ENCODE measurements at regions of chr13 and their contacts with region 1.

Region 1: DNA sequence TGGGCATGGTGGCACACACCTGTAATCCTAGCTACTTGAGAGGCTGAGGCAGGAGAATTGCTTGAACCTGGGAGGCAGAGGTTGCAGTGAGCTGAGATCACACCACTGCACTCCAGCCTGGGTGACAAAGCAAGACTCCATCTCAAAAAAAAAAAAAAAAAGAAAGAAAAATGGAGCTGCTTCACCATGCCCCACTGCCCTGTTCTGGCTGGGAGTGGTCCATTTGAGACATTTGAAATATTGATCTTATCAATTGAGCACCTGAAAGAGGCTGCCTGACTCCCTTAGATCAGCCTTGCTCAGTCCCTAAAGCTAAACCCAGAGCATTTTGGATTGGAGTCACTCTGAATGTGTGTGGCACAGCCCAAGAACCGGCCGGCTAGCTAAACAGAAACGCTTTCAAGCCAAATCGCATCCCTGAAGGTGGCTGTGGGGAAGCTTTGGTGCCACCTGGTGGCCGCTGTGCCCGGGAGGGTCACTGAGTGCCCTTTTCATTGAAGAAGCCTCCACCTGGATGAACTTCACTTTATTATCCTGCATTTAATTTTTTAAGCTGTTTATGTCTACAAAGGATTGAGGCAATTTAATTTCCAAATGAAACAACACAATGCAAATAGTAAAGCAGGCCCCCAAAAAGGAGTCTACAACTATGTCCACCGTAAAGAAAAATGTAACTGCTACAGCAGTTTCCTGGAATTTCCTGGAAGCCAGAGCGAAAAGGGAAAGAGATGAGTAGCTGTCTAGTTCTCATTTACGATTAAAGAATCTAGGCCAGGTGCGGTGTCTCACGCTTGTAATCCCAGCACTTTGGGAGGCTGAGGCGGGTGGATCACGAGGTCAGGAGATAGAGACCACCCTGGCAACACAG is 53.1 kb upstream of the SERPINE3 start:
- DNase-seq: peak; percentile 80
- ATAC-seq: peak; percentile 92
- H3K4me3 Mint-ChIP-seq: no peak overlapping the region
- H3K27ac Mint-ChIP-seq: no peak overlapping the region
- H3K4me1 Mint-ChIP-seq: peaks cover 16% of the 10 kb centered on the region
- H3K27me3 Mint-ChIP-seq: peaks cover 2% of the 10 kb centered on the region

Region 2: GRCh38 chr13:50843257-50844083 is 442.9 kb before region 1 on chr13 and contains the start of gene DLEU7:
- CTCF ChIA-PET with region 1: no interaction called
- POLR2A ChIA-PET with region 1: no interaction called
- DNase-seq: no peak
- ATAC-seq: no peak
- H3K4me3 Mint-ChIP-seq: no peak within 1 kb of the TSS
- H3K27ac Mint-ChIP-seq: no peak within 1 kb of the TSS
- H3K4me1 Mint-ChIP-seq: peaks cover 26% of the 10 kb centered on the region
- H3K27me3 Mint-ChIP-seq: peaks cover 2% of the 10 kb centered on the region
- total RNA-seq, gene DLEU7: not detected

Region 3: GRCh38 chr13:51125498-51126226 is 160.7 kb before region 1 on chr13:
- CTCF ChIA-PET with region 1: interaction called, 151 read pairs
- POLR2A ChIA-PET with region 1: no interaction called
- DNase-seq: peak; percentile 62
- ATAC-seq: peak; percentile 82
- H3K4me3 Mint-ChIP-seq: no peak overlapping the region
- H3K27ac Mint-ChIP-seq: no peak overlapping the region
- H3K4me1 Mint-ChIP-seq: peaks cover 11% of the 10 kb centered on the region
- H3K27me3 Mint-ChIP-seq: peaks cover 16% of the 10 kb centered on the region

Region 4: DNA sequence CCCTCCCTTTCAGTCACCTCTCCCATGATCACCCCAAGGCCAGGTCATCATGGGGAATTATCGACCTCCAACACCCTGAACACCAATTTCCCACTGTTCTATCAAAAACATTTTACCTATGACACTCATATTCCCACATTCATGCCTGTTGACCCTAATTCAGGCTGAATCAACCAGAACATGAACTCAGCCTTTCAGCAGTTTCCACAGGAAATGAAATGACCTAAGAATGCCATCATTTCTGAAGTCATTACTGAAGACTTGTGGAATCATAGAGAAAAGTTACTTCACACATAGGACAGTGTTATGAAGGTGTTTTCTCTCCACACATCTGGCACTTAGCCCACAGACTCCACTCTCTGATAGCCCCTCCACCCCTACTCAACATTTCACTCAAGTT is 94.0 kb before region 1 on chr13:
- CTCF ChIA-PET with region 1: interaction called, 13 read pairs
- POLR2A ChIA-PET with region 1: no interaction called
- DNase-seq: no peak
- ATAC-seq: no peak
- H3K4me3 Mint-ChIP-seq: no peak overlapping the region
- H3K27ac Mint-ChIP-seq: no peak overlapping the region
- H3K4me1 Mint-ChIP-seq: no peaks in the 10 kb centered on the region
- H3K27me3 Mint-ChIP-seq: peaks cover 16% of the 10 kb centered on the region

Region 5: DNA sequence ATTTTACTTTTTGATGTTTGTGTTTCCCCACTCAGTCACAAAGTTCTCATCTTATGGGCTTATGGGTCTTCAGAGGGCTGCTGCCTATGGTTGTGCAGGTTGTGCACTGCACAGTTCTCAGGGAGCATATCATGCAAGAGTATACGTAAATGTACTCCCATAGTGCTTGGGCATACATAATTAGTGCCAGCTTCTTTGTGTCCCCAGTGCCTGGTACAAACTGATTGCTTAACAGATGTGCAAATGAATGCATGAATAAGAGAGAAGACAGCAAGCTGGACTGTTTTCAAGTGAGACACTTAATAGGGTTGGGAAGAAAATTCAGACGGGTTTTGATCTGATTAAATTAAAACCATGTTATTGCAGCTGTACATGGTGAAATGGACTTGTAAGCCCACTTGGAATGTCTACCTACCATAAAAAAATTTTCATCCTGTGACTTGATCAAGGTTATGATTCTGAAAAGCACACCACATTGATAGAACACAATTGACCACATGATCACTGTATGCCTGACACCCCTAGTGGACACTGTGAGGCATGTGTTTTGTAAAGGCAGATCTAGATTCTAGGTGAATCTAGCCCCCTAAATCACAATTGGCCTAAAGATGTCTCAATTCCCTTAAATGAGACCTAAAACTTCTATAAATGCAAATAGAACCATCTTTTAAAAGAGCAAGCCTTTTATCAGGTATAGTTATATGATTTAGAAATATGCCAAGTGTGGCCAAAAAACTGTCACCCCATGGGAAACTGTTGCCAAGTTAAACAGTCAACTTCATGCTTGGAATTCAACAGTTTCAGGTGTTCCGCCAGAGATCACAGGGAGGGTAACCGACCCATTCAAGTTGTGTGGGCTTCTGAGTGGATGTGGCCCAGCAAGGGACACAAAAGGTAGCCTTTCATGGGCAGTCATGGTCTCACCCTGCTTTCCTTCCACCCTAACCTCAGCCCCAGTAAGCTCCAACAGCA is 36.3 kb before region 1 on chr13:
- CTCF ChIA-PET with region 1: interaction called, 16 read pairs
- POLR2A ChIA-PET with region 1: no interaction called
- DNase-seq: no peak
- ATAC-seq: no peak
- H3K4me3 Mint-ChIP-seq: no peak overlapping the region
- H3K27ac Mint-ChIP-seq: no peak overlapping the region
- H3K4me1 Mint-ChIP-seq: peaks cover 10% of the 10 kb centered on the region
- H3K27me3 Mint-ChIP-seq: peaks cover 4% of the 10 kb centered on the region

Region 6: DNA sequence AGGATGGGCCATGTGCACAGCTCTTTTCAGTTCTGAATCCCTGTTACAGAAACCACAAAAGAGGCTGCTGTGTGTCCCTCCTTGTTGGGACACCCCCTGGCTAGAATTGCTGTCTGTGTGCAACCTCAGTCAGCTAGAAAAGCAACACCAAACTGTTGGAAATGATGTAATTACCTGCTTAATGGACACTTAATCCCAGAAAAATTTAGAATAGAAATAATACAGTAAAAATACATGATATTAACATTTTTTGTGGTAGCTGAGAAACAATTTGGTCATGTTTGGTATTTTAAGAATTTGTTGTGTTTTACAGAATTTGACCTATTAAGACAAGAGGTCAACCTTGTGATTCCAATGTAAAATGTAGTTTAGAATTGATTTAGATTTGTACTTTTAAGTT is 17.3 kb before region 1 on chr13:
- CTCF ChIA-PET with region 1: interaction called, 32 read pairs
- POLR2A ChIA-PET with region 1: no interaction called
- DNase-seq: no peak
- ATAC-seq: no peak
- H3K4me3 Mint-ChIP-seq: no peak overlapping the region
- H3K27ac Mint-ChIP-seq: no peak overlapping the region
- H3K4me1 Mint-ChIP-seq: no peaks in the 10 kb centered on the region
- H3K27me3 Mint-ChIP-seq: peaks cover 9% of the 10 kb centered on the region

Region 7: GRCh38 chr13:51308781-51309180 is 22.4 kb after region 1 on chr13:
- CTCF ChIA-PET with region 1: interaction called, 12 read pairs
- POLR2A ChIA-PET with region 1: no interaction called
- DNase-seq: no peak
- ATAC-seq: no peak
- H3K4me3 Mint-ChIP-seq: no peak overlapping the region
- H3K27ac Mint-ChIP-seq: no peak overlapping the region
- H3K4me1 Mint-ChIP-seq: no peaks in the 10 kb centered on the region
- H3K27me3 Mint-ChIP-seq: peaks cover 14% of the 10 kb centered on the region